Ascending aorta (tissue), 2 donors: ENCODE measurements at regions of chrX and their contacts with region 1.

Region 1: DNA sequence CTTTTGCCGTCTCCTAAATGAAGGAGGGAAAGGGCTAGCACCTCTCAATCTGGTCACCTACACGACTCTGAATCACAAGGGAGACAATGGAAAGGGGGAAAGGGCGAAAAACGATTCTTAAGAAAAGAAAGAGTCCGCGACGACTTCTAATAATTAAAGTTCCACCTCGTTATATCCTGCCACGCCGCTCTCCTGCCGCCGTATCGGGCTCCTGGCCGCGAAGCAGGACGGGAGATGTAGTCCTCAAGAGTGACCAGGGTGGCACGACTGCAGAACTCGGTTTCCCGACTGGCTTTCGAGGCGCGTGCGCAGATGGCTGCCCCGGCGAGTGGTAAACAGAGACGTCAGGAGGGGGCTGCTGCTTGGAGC is at the start of gene FOXO4:
- DNase-seq: peak; percentile 74 to 93
- H3K4me3 ChIP-seq: peak within 1 kb of the TSS; percentile 55 to 64
- H3K27ac ChIP-seq: peak within 1 kb of the TSS; percentile 49 to 73
- H3K4me1 ChIP-seq: peaks cover 0 to 4% of the 10 kb centered on the region in 2 donors
- H3K27me3 ChIP-seq: no peaks in the 10 kb centered on the region
- CTCF ChIP-seq: no peak
- total RNA-seq, gene FOXO4: 8.0 TPM

Region 2: GRCh38 chrX:71076487-71076886 is 19.0 kb before region 1 on chrX:
- intact Hi-C with region 1: no loop called
- DNase-seq: no peak
- H3K4me3 ChIP-seq: no peak overlapping the region
- H3K27ac ChIP-seq: no peak overlapping the region
- H3K4me1 ChIP-seq: no peaks in the 10 kb centered on the region
- H3K27me3 ChIP-seq: no peaks in the 10 kb centered on the region
- CTCF ChIP-seq: no peak

Region 3: GRCh38 chrX:71118032-71118984 is 22.8 kb after region 1 on chrX and contains the start of gene MED12:
- intact Hi-C with region 1: loop called (anchors 1 kb)
- DNase-seq: peak; percentile 33 to 86
- H3K4me3 ChIP-seq: peak within 1 kb of the TSS; percentile 61 to 62
- H3K27ac ChIP-seq: peak within 1 kb of the TSS; percentile 66 to 69
- H3K4me1 ChIP-seq: peaks cover 0 to 4% of the 10 kb centered on the region in 2 donors
- H3K27me3 ChIP-seq: no peaks in the 10 kb centered on the region
- CTCF ChIP-seq: no peak
- total RNA-seq, gene MED12: 36.9 TPM

Region 4: DNA sequence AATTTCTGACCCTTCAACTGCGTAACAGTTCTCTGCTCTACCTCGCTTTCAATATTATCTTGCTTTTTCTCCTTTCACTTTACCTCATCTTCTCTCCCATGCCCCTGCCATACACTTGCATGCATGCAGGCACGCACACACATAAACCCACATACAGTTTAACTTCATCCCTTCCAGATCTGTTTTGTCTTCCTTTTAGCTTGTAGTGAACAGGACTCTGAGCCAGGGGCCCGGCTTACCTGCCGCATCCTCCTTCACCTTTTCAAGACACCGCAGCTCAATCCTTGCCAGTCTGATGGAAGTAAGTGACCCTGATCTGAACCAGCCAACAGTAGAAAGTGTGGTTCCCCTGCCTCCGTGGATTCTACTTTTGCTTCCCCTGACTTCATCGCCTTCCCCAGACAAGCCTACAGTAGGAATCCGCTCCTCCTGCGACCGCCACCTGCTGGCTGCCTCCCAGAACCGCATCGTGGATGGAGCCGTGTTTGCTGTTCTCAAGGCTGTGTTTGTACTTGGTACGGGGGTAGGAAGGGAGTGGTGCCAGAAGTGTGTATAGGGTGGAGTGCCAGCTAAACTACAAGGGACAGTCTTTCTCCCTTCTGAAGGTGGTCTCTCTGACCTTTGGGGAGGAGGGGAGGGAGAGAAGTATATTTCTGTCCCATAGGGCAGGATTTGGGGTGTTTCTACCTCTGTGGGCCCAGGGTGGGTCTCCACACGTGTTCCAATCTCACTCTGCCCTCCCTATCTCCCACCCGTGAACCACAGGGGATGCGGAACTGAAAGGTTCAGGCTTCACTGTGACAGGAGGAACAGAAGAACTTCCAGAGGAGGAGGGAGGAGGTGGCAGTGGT is 33.6 kb after region 1 on chrX:
- intact Hi-C with region 1: no loop called
- DNase-seq: peak in 1 of 2 donors; percentile 81
- H3K4me3 ChIP-seq: no peak overlapping the region
- H3K27ac ChIP-seq: no peak overlapping the region
- H3K4me1 ChIP-seq: no peaks in the 10 kb centered on the region
- H3K27me3 ChIP-seq: no peaks in the 10 kb centered on the region
- CTCF ChIP-seq: peak in 2 of 3 experiments; percentile 56 to 61